ENCODE measurements at regions of chr5 and their contacts with region 1.

Region 1: GRCh38 chr5:32559411-32559810 is 25.9 kb upstream of the SUB1 start:
- DNase-seq: no peak
- H3K4me3 ChIP-seq: no peak overlapping the region
- H3K27ac ChIP-seq: no peak overlapping the region
- H3K4me1 ChIP-seq: no peaks in the 10 kb centered on the region
- H3K27me3 ChIP-seq: no peaks in the 10 kb centered on the region
- CTCF ChIP-seq: no peak

Region 2: DNA sequence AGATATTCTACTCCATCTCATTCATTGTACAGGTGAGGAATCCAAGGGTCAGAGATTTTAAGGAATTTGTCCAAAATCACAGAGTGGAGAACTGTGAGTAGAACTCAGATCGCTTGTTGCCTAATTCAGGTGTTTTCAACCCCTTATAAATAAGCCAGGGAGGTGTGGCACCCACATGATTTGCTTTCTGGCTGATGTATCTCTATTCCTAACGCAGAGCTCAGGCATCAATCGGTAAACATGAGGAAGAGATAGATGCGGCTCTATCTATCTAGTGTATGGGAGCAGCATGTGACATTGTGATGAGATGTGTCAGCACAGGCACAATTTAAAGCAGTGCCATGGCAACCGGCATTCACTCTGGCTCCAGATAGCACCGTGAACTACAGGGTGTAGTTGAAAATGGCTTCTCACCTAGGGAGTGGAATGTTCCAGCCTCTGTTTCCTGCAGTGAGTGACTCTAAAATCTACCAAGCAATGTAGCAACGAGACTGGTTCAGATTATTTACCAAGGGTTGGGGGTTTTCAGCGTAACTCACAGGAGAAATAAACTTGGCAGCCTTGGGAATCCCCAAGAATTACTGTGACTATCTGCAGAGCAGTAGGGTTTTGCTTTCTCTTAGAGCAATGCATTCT is 27.4 kb before region 1 on chr5:
- CTCF ChIA-PET with region 1: interaction called, 4 read pairs
- POLR2A ChIA-PET with region 1: no interaction called
- intact Hi-C with region 1: loop called (anchors 2 kb)
- DNase-seq: peak; percentile 24
- H3K4me3 ChIP-seq: no peak overlapping the region
- H3K27ac ChIP-seq: no peak overlapping the region
- H3K4me1 ChIP-seq: peaks cover 13% of the 10 kb centered on the region
- H3K27me3 ChIP-seq: no peaks in the 10 kb centered on the region
- CTCF ChIP-seq: no peak

Region 3: GRCh38 chr5:33369485-33370472 is 810.4 kb after region 1 on chr5:
- CTCF ChIA-PET with region 1: no interaction called
- POLR2A ChIA-PET with region 1: interaction called, 13 read pairs
- intact Hi-C with region 1: no loop called
- DNase-seq: no peak
- H3K4me3 ChIP-seq: no peak overlapping the region
- H3K27ac ChIP-seq: no peak overlapping the region
- H3K4me1 ChIP-seq: no peaks in the 10 kb centered on the region
- H3K27me3 ChIP-seq: no peaks in the 10 kb centered on the region
- CTCF ChIP-seq: no peak